ENCODE measurements at regions of chr19 and their contacts with region 1.

Region 1: GRCh38 chr19:39792999-39793546 is 14.4 kb downstream of the LEUTX start:
- DNase-seq: peak; percentile 30
- H3K4me3 ChIP-seq: peak overlapping the region; percentile 69
- H3K27ac ChIP-seq: no peak overlapping the region
- H3K27me3 ChIP-seq: peaks cover 3% of the 10 kb centered on the region
- CTCF ChIP-seq: peak; percentile 97

Region 2: DNA sequence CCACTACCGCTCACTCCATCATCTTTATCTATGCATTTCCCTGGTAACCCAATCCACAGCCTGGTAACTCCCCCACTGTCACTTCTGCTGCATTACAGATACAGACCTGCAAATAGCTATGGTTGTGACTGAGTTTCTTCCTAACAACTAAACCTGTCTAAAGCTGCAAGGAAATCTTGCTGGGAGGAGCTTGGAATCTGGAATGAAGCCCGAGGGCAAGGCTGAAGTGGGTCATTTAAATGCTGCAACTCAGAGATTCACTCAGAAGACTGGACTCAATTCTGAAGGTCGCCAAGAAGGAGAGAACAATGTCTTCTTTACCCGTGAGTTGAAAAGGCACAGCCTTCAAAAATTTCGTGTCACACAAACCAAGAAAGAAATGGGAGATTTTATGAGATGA is 190.8 kb before region 1 on chr19 and contains the start of gene LGALS13:
- CTCF ChIA-PET with region 1: no interaction called
- POLR2A ChIA-PET with region 1: no interaction called
- DNase-seq: no peak
- H3K4me3 ChIP-seq: no peak within 1 kb of the TSS
- H3K27ac ChIP-seq: no peak within 1 kb of the TSS
- H3K27me3 ChIP-seq: no peaks in the 10 kb centered on the region
- CTCF ChIP-seq: no peak
- polyA plus RNA-seq, gene LGALS13: not detected in 2 replicates

Region 3: GRCh38 chr19:39765091-39766076 is 27.7 kb before region 1 on chr19:
- CTCF ChIA-PET with region 1: interaction called, 21 read pairs
- POLR2A ChIA-PET with region 1: no interaction called
- DNase-seq: no peak
- H3K4me3 ChIP-seq: no peak overlapping the region
- H3K27ac ChIP-seq: no peak overlapping the region
- H3K27me3 ChIP-seq: peaks cover under 1% of the 10 kb centered on the region
- CTCF ChIP-seq: peak; percentile 82

Region 4: DNA sequence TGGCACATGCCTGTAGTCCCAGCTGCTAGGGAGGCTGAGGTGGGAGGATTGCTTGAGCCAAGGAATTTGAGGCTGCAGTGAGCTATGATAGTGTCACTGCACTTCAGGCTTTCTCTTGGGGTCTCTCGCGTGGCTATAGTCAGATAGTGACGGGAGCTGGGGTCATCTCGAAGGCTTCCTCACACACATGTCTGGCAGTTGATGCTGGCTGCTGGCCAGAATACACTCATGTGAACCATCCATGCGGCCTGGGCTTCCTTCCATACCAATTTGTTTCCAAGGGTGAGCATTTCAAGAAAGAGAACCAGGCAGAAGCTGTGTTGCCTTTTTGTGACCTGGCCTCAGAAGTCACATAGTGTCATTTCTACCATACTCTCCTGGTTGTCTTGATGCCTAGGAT is 12.0 kb after region 1 on chr19:
- CTCF ChIA-PET with region 1: interaction called, 18 read pairs
- POLR2A ChIA-PET with region 1: no interaction called
- DNase-seq: no peak
- H3K4me3 ChIP-seq: no peak overlapping the region
- H3K27ac ChIP-seq: no peak overlapping the region
- H3K27me3 ChIP-seq: peaks cover 6% of the 10 kb centered on the region
- CTCF ChIP-seq: no peak

Region 5: GRCh38 chr19:39824143-39825092 is 31.3 kb after region 1 on chr19:
- CTCF ChIA-PET with region 1: interaction called, 11 read pairs
- POLR2A ChIA-PET with region 1: interaction called, 11 read pairs
- DNase-seq: peak; percentile 72
- H3K4me3 ChIP-seq: peak overlapping the region; percentile 82
- H3K27ac ChIP-seq: peak overlapping the region; percentile 21
- H3K27me3 ChIP-seq: no peaks in the 10 kb centered on the region
- CTCF ChIP-seq: no peak

Region 6: GRCh38 chr19:39846176-39846677 is 53.2 kb after region 1 on chr19 and contains the start of gene FBL:
- CTCF ChIA-PET with region 1: interaction called, 226 read pairs
- POLR2A ChIA-PET with region 1: no interaction called
- DNase-seq: peak; percentile 75
- H3K4me3 ChIP-seq: peak within 1 kb of the TSS; percentile 92
- H3K27ac ChIP-seq: peak within 1 kb of the TSS; percentile 77
- H3K27me3 ChIP-seq: no peaks in the 10 kb centered on the region
- CTCF ChIP-seq: no peak
- polyA plus RNA-seq, gene FBL: 256 and 329 TPM in 2 replicates

Measured in AG04450 (cell line).